ENCODE measurements at regions of chr9 and their contacts with region 1.

Region 1: GRCh38 chr9:128629852-128630545 is 26.6 kb downstream of the DYNC2I2 start:
- DNase-seq: no peak
- H3K4me3 ChIP-seq: no peak overlapping the region
- H3K27ac ChIP-seq: peak overlapping the region in 1 of 2 donors; percentile 7
- H3K4me1 ChIP-seq: peaks cover 6 to 7% of the 10 kb centered on the region in 2 donors
- H3K27me3 ChIP-seq: no peaks in the 10 kb centered on the region
- CTCF ChIP-seq: no peak
- POLR2A ChIP-seq: no peak

Region 2: GRCh38 chr9:128607642-128608350 is 22.2 kb before region 1 on chr9:
- intact Hi-C with region 1: loop called (anchors 1 kb)
- DNase-seq: peak; percentile 70 to 95
- H3K4me3 ChIP-seq: no peak overlapping the region
- H3K27ac ChIP-seq: peak overlapping the region; percentile 71 to 72
- H3K4me1 ChIP-seq: no peaks in the 10 kb centered on the region
- H3K27me3 ChIP-seq: no peaks in the 10 kb centered on the region
- CTCF ChIP-seq: no peak
- POLR2A ChIP-seq: no peak

Measured in breast epithelium (tissue), 4 donors.